Esophagus muscularis mucosa (tissue), 4 donors: ENCODE measurements at regions of chr10 and their contacts with region 1.

Region 1: DNA sequence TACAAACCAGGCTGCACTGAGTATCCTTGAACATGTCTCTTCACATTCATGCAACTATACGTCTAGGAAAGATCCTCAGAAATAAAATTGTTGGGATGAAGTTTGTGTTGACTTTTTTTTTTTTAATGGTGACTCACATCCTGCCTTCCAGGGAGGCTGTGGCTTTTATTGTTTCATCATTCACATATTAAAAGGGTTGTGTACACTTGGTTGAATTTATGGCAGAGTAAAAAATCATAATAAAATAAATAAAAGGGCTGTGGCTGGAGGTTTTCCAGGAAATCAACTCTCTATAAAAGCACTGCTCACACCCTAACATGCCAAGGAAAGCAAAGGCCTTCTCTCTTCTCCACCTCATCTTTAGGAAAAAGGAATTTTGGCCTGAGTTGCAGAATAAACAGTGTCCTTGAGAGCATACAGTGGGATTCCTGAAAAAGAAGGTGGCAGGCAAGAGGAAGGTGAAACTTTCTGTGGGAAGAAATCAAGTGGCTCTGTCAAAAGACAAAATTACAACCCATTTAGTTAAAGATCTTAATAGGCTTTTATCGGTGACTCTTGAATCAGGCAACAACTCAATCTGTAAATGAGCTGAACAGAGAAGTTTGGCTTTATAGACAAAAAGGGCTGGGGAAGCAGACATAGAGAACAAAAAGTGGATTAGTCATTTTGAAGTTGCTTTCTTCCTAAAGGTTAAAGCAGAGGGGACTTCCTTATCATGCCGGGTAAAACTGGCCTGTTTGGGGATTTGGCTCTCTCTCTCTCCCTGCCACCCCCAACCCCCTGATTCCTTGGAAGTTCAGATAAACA is 41.6 kb upstream of the FHIP2A start:
- DNase-seq: no peak
- H3K4me3 ChIP-seq: no peak overlapping the region
- H3K27ac ChIP-seq: peak overlapping the region in 3 of 4 donors; percentile 20 to 39 (median 25)
- H3K4me1 ChIP-seq: peaks cover 15 to 25% (median 19%) of the 10 kb centered on the region in 4 donors
- H3K27me3 ChIP-seq: no peaks in the 10 kb centered on the region
- CTCF ChIP-seq: no peak
- EP300 ChIP-seq: no peak
- POLR2A ChIP-seq: no peak

Region 2: DNA sequence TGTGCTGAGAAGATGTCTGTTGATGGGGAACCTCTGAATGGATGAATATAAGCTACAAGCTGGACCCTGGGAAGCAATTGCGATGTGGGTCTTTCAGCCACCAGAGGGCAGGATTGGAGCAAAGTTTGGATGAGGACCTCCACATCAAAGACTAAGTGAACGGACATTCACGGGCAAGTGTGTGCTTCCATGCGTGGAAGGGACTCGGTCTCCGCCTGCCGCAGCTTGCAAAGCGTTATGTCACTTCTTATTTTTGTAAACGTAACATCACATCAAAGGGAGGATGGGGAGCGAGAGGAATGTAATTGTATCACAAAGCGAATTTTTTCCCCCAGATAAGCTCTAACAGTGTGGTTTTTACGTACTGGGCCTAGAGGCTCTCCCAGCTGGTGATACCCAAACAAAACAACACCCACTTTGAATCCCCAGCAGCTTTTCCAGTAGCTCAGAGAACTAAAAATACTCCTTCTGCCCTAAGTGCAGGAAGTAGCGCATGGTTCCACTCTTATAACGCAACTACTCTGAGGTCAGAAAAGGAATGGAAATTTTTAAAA is 475.9 kb before region 1 on chr10:
- intact Hi-C with region 1: loop called (anchors 10 kb)
- DNase-seq: peak; percentile 96
- H3K4me3 ChIP-seq: peak overlapping the region; percentile 34 to 54 (median 40)
- H3K27ac ChIP-seq: peak overlapping the region; percentile 15 to 57 (median 20)
- H3K4me1 ChIP-seq: peaks cover 26 to 59% (median 35%) of the 10 kb centered on the region in 4 donors
- H3K27me3 ChIP-seq: peaks cover 0 to 6% (median 0%) of the 10 kb centered on the region in 4 donors
- CTCF ChIP-seq: peak; percentile 82 to 83 (median 83)
- EP300 ChIP-seq: no peak
- POLR2A ChIP-seq: no peak

Region 3: DNA sequence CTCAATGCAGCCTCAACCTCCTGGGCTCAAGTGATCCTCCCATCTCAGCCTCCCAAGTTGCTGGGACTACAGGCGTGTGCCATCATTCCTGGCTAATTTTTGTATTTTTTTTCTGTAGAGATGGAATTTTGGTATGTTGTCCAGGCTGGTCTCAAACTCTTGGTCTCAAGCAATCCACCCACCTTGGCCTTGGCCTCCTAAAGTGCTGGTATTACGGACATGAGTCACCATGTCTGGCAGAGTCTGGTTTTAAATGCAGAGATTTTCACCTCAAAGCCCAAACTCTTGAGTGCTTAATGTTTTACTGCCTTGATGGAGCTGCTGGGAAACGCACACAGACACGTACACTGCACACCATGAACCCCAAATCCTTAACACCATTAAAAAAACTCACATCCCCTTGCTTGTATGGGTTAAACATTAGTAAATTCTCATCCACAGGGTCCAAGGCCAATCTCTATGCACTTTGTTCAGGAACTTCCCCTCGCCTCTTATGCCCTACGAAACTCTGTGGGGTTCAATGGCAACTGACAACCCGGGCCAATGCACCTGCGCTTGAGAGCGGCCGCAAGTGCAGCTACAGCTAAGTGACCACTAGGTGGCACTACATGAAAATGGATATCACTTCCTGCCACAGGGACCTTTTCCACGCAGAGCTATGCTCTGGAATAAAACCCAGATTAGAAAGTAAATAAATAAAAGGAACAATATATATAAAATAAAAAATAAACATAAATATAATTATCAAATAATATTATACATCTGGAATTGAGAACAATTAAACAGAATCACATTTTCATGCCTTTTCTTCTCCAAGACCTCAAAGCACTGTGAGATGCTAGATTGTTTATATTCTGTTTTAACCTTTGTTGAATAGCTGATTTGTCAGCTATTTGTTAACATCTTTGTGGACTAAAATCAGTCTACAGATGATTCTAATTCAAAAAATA is 308.8 kb before region 1 on chr10:
- intact Hi-C with region 1: loop called (anchors 10 kb)
- DNase-seq: no peak
- H3K4me3 ChIP-seq: no peak overlapping the region
- H3K27ac ChIP-seq: peak overlapping the region in 2 of 4 donors; percentile 29 to 31
- H3K4me1 ChIP-seq: peaks cover 16 to 27% (median 21%) of the 10 kb centered on the region in 4 donors
- H3K27me3 ChIP-seq: no peaks in the 10 kb centered on the region
- CTCF ChIP-seq: peak; percentile 92
- EP300 ChIP-seq: no peak
- POLR2A ChIP-seq: no peak

Region 4: DNA sequence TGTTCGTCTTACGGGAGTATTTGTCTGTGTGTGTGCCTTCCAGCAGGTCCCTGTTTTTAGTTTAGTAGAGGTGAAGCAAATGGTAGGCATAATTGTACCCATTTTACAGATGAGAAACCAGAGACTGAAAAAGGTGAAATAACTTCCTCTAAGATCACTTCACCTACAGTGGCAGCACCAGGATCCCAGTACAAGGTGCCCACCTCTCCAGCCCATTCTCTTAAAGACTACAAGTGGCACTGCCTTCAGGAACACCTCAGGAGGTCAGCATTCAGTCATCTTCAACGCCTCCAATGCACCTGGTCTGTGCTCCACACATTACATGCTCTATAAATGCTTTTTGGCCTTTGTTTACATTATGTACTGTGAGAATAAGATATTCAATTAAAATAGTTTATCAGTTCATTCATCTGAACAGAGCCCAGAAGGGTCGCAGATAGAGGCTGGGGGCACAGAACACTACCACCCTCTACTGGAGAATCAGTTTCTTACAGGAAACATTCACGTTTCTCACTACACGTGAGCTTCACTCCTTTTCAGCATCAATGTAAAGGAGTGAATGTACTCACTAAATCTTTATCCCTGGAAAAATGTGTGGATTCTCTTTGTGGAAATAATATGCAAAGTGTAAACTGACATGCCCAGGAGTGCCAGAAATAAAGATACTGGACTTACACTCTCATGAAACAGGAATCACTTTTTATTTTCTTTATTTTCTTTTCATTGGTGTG is 76.5 kb before region 1 on chr10:
- intact Hi-C with region 1: loop called (anchors 5 kb)
- DNase-seq: no peak
- H3K4me3 ChIP-seq: no peak overlapping the region
- H3K27ac ChIP-seq: no peak overlapping the region
- H3K4me1 ChIP-seq: peaks cover 1 to 8% (median 3%) of the 10 kb centered on the region in 4 donors
- H3K27me3 ChIP-seq: peaks cover 0 to 9% (median 0%) of the 10 kb centered on the region in 4 donors
- CTCF ChIP-seq: peak; percentile 52 to 65 (median 60)
- EP300 ChIP-seq: no peak
- POLR2A ChIP-seq: no peak

Region 5: DNA sequence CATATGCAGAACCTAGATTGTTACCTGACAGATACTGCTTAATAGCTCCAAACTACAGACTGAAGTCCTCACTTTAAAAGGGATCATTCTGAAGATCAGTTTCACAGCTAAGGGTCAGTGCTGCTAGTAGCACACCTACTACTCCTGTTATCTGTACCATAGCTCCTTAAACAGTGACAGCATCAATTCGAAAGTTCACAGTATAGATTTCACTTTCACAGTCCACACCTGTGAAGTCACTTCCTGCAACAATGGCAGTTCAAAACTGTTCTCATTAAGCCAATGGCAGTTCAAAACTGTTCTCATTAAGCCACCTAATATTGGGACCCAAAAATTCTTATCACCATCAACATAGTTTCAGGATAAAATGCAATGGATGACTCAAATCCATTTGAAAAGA is 30.9 kb after region 1 on chr10:
- intact Hi-C with region 1: no loop called
- DNase-seq: no peak
- H3K4me3 ChIP-seq: no peak overlapping the region
- H3K27ac ChIP-seq: no peak overlapping the region
- H3K4me1 ChIP-seq: no peaks in the 10 kb centered on the region
- H3K27me3 ChIP-seq: no peaks in the 10 kb centered on the region
- CTCF ChIP-seq: no peak
- EP300 ChIP-seq: no peak
- POLR2A ChIP-seq: no peak

Region 6: DNA sequence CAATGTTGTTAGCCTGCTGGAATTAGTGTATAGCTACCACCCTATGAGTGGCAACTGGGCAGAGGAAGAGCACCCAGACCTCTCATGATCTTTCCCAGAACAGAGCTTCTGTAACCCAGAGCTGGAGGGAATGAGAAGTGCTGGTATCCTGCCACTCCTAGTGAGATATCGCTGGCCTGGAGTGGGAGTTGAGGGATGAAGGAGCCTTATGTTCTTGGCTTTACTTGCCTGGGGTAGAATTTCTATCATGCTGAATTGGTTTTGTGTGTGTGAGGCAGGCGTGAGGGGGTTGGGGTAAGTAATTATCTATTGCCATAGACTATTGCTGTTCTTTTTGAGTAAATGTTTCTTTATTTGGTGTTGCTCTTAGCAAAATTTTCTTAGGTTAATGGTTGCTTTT is 459.8 kb after region 1 on chr10:
- intact Hi-C with region 1: no loop called
- DNase-seq: no peak
- H3K4me3 ChIP-seq: no peak overlapping the region
- H3K27ac ChIP-seq: no peak overlapping the region
- H3K4me1 ChIP-seq: no peaks in the 10 kb centered on the region
- H3K27me3 ChIP-seq: no peaks in the 10 kb centered on the region
- CTCF ChIP-seq: no peak
- EP300 ChIP-seq: no peak
- POLR2A ChIP-seq: no peak